Kidney (tissue), 22 donors: ENCODE measurements at regions of chr4 and their contacts with region 1.

Region 1: DNA sequence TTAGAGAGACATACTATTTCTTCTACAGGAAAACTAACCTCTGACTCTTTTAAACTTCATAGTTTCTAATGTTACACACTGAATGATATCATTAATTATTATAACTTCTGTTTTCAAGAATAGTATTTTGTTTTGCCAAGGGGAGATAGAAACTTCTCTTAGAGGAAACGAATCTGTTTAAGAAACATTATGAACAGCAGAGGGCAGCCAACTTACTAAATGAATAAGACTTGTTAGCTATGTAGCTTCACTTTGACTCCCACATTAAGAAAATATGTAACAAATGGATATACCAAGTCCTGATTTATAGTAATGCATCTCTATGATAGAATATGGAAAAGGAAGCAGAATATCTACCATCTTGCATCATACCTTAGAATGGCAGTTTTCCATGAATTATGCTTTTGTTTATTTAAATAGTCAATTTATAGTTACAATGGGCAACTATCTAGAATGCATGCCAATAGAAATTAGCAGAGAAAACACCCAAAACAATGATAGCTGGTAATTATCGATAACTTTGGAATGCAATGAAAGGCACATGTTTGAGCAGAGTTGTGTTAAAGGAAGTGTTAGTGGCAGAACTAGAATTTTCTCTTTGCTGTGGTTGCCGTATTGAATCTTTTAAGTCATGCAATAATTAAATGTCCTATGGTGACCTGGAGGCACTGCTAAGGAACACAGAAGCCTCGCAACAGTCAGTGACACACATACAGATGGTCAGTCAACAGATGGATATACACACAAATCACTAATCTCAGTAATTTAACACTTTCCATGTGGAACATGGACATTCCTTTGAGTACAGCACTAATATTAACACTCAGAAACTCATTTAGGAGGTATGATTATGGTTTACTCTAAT is 105.7 kb upstream of the PDLIM3 start:
- DNase-seq: peak in 2 of 5 donors; percentile 71 to 86
- H3K4me3 ChIP-seq: no peak overlapping the region
- H3K27ac ChIP-seq: no peak overlapping the region
- H3K4me1 ChIP-seq: peaks cover 0 to 2% (median 2%) of the 10 kb centered on the region in 3 donors
- H3K27me3 ChIP-seq: no peaks in the 10 kb centered on the region
- CTCF ChIP-seq: peak; percentile 44

Region 2: DNA sequence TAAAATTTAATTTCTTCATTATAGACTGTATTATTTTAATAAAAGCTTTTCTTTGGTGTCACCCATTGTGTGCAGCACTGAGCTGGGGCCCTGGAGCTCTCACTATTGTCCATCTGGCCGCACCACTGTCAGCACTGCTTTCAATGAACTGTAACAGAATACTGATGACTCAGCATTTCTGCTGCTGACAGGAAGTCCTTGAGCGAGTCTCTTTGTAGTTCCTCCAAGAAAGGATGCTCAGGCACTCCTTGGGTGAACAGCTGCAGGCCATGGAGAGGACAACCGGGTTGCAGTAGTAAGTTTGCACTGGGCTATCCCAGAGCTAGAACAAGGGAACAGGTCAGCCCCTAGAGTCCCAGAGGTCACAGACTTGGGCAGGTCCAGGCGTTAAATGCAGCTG is 89.3 kb after region 1 on chr4:
- intact Hi-C with region 1: no loop called
- DNase-seq: peak in 1 of 5 donors; percentile 49
- H3K4me3 ChIP-seq: no peak overlapping the region
- H3K27ac ChIP-seq: no peak overlapping the region
- H3K4me1 ChIP-seq: peaks cover 0 to 14% (median 7%) of the 10 kb centered on the region in 3 donors
- H3K27me3 ChIP-seq: no peaks in the 10 kb centered on the region
- CTCF ChIP-seq: no peak

Region 3: DNA sequence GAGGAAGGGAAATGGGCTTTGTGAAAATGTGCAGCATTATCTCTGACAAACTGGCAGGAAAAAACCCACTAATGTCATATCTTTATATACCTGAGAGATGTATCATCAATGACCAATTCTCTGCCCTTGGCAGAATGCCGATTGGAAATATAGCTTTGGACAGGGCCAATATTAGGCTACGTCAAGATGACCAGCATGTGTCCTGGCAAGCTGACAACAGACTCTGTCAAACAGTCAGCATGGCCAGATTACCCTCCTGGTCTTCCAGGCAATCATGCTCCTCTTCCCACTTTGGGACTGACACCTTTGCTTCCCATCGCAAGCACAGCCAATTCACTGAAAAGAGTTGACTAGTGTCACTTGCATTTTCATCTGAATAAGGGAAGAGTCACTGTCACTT is 113.9 kb after region 1 on chr4:
- intact Hi-C with region 1: no loop called
- DNase-seq: no peak
- H3K4me3 ChIP-seq: no peak overlapping the region
- H3K27ac ChIP-seq: no peak overlapping the region
- H3K4me1 ChIP-seq: no peaks in the 10 kb centered on the region
- H3K27me3 ChIP-seq: no peaks in the 10 kb centered on the region
- CTCF ChIP-seq: no peak

Region 4: DNA sequence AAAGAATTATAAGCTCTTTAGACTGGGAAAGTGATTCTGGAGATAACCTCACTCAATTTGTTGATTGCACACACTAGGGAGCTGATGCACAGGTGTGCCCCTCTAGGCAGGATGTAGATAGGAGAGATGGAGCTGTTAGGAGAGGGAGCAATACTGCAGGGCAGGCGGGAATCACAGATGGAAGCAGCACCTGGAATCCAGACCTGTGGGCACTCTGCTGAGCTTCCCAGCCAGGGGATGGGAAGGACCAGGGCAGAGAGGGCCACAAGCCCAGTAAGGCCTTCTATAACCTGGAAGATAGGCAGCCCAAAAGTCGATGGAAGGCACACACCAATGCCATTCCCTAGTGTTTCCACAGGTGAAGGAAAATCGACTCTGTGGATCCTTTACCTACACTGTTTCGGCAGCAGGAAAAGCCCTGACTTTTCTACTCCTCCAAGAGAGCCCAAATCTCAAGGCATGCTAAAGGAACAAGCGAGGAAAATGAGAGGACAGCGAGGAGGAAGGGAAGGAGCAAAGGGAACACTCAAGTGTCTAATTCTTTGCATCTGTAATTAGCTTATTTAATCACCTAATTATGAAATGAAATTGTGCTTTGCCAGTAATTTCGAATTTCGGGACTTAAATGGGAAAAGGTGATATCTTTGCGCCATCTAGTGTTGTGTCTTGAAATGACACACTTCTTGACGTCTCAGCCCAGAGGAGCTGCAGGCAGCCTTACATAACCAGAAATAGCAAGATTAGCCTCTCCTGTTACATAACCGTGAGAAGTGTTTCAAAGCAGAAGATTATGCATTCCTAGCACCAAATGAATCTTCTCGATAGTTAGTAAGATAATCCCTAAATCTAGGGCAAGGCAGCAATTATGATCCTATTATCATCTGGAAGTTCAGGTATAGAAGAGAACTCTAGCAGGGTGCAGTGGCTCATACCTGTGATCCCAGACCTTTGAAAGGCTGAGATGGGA is 396.9 kb after region 1 on chr4:
- intact Hi-C with region 1: loop called (anchors 5 kb)
- DNase-seq: peak in 3 of 5 donors; percentile 70 to 88 (median 86)
- H3K4me3 ChIP-seq: no peak overlapping the region
- H3K27ac ChIP-seq: no peak overlapping the region
- H3K4me1 ChIP-seq: peaks cover 0 to 7% (median 0%) of the 10 kb centered on the region in 3 donors
- H3K27me3 ChIP-seq: no peaks in the 10 kb centered on the region
- CTCF ChIP-seq: peak; percentile 93